ENCODE measurements at regions of chr11 and their contacts with region 1.

Region 1: GRCh38 chr11:122045181-122045586 is 70.8 kb downstream of the BLID start:
- DNase-seq: no peak
- H3K4me3 ChIP-seq: no peak overlapping the region
- H3K27ac ChIP-seq: peak overlapping the region; percentile 14 to 88
- H3K4me1 ChIP-seq: peaks cover 0 to 45% (median 10%) of the 10 kb centered on the region in 4 donors
- H3K27me3 ChIP-seq: no peaks in the 10 kb centered on the region
- CTCF ChIP-seq: no peak

Region 2: DNA sequence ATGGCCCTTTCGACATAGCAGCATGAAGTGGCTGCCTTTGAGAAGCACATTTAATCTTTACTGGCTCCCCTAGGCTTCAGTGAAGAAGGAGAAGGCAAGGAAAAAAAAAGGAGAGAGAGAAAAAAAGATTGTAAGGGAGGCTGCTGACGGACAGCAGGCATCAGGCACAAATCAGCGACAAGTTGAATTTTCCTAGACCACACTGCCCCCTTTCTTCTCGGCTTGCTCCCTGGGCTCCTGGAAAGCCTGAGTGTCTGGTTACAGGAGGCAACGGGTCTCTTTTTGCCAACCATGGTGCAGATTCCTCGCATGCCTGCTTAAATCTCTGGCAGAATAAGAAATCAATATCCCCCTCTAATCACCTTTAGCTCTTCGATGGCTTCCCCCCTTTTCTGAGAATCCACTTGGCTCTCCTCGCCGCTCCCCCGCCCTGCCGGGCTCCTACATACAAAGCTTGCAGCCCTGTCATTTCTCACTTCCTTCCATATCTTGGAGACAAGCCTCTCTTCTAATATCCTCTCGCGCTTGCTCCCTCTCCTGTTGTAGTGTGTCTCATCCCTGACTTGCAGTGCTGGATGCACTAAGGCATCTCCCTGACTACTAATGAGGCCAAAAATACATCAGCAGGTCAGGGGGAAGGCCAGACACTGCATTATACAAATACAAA is 56.6 kb after region 1 on chr11:
- intact Hi-C with region 1: loop called (anchors 10 kb)
- DNase-seq: peak; percentile 78 to 90
- H3K4me3 ChIP-seq: peak overlapping the region; percentile 64 to 68
- H3K27ac ChIP-seq: peak overlapping the region; percentile 80 to 91
- H3K4me1 ChIP-seq: peaks cover 0 to 39% (median 9%) of the 10 kb centered on the region in 4 donors
- H3K27me3 ChIP-seq: no peaks in the 10 kb centered on the region
- CTCF ChIP-seq: peak; percentile 64 to 65